A673 (cell line): ENCODE measurements at regions of chr14 and their contacts with region 1.

Region 1: GRCh38 chr14:69129264-69129880 is 23.5 kb downstream of the DCAF5 start:
- DNase-seq: peak; percentile 91
- H3K4me3 ChIP-seq: no peak overlapping the region
- H3K27ac ChIP-seq: peak overlapping the region; percentile 47
- H3K4me1 ChIP-seq: peaks cover 38% of the 10 kb centered on the region
- H3K27me3 ChIP-seq: no peaks in the 10 kb centered on the region
- CTCF ChIP-seq: peak; percentile 97

Region 2: GRCh38 chr14:68703093-68703492 is 426.3 kb before region 1 on chr14:
- CTCF ChIA-PET with region 1: no interaction called
- POLR2A ChIA-PET with region 1: no interaction called
- intact Hi-C with region 1: no loop called
- DNase-seq: no peak
- H3K4me3 ChIP-seq: no peak overlapping the region
- H3K27ac ChIP-seq: no peak overlapping the region
- H3K4me1 ChIP-seq: no peaks in the 10 kb centered on the region
- H3K27me3 ChIP-seq: no peaks in the 10 kb centered on the region
- CTCF ChIP-seq: no peak

Region 3: DNA sequence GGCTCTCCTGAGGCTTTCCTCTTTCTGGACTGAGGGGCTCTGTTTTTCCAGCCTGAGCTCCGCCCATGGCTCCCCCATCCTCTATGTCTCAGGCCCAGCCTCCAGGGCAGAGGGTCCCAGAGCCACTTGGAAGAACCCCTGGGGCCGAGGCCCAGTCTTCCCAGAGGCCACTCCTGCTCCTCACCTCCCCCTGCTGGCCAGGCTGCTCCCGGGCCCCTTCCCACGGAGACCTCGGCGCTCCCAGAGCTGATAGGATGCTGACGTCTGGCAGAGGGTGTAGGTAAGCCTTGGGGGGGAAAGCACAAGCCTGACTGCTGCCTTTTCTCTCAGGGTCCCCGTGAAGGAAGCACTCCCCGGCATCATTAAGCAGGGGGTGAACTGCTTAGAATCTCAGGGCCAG is 217.3 kb after region 1 on chr14:
- CTCF ChIA-PET with region 1: no interaction called
- POLR2A ChIA-PET with region 1: no interaction called
- intact Hi-C with region 1: loop called (anchors 5 kb)
- DNase-seq: peak; percentile 48
- H3K4me3 ChIP-seq: no peak overlapping the region
- H3K27ac ChIP-seq: no peak overlapping the region
- H3K4me1 ChIP-seq: no peaks in the 10 kb centered on the region
- H3K27me3 ChIP-seq: no peaks in the 10 kb centered on the region
- CTCF ChIP-seq: peak; percentile 67

Region 4: DNA sequence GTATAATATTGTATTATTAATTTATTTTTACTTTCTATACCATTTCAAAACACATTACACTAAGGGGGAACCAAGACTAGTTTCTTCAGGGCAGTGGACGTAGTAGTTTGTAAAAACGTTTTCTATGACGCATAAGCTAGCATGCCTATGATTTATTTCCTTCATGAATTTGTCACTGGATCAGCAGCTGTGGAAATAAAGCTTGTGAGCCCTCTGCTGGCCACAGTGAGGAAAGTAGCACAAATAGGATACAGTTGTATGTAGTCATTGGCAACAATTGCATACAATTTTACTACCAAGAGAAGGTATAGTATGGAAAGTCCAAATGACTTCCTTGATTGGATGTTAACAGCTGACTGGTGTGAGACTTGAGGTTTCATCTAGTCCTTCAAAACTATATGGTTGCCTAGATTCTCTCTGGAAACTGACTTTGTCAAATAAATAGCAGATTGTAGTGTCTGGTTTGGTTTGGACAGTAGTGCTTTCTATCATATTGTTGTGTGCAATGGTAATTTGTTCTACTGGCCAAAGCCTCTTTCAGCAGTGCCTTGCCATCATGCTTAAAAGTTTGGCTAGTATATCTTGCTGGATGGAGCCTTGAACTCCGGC is 330.8 kb after region 1 on chr14:
- CTCF ChIA-PET with region 1: interaction called, 5 read pairs
- POLR2A ChIA-PET with region 1: no interaction called
- intact Hi-C with region 1: loop called (anchors 5 kb)
- DNase-seq: peak; percentile 86
- H3K4me3 ChIP-seq: no peak overlapping the region
- H3K27ac ChIP-seq: no peak overlapping the region
- H3K4me1 ChIP-seq: no peaks in the 10 kb centered on the region
- H3K27me3 ChIP-seq: no peaks in the 10 kb centered on the region
- CTCF ChIP-seq: peak; percentile 89